IMR-90 (cell line): ENCODE measurements at regions of chr11 and their contacts with region 1.

Region 1: GRCh38 chr11:120335908-120336640 is at the start of gene ARHGEF12:
- DNase-seq: peak; percentile 97
- ATAC-seq: peak; percentile 61
- H3K4me3 ChIP-seq: peak within 1 kb of the TSS; percentile 93
- H3K27ac ChIP-seq: peak within 1 kb of the TSS; percentile 92
- H3K4me1 ChIP-seq: peaks cover 6% of the 10 kb centered on the region
- H3K27me3 ChIP-seq: no peaks in the 10 kb centered on the region
- CTCF ChIP-seq: peak; percentile 31; the same call in 1 of the 2 replicates
- POLR2A ChIP-seq: peak; percentile 73
- RAD21 ChIP-seq: no peak
- total RNA-seq, gene ARHGEF12: 115 and 131 TPM in 2 replicates

Region 2: GRCh38 chr11:120400564-120401364 is 64.7 kb after region 1 on chr11:
- CTCF ChIA-PET with region 1: no interaction called
- POLR2A ChIA-PET with region 1: no interaction called
- dilution Hi-C with region 1: no loop called
- in situ Hi-C with region 1: no loop called
- intact Hi-C with region 1: loop called (anchors 2 kb)
- DNase-seq: peak; percentile 99
- ATAC-seq: peak; percentile 86
- H3K4me3 ChIP-seq: peak overlapping the region; percentile 13; the same call in 1 of the 2 replicates
- H3K27ac ChIP-seq: no peak overlapping the region
- H3K4me1 ChIP-seq: peaks cover 3% of the 10 kb centered on the region; the same call in 1 of the 2 replicates
- H3K27me3 ChIP-seq: no peaks in the 10 kb centered on the region
- CTCF ChIP-seq: no peak
- POLR2A ChIP-seq: no peak
- RAD21 ChIP-seq: 0 out of 2 replicates have a peak, but pooled peaks have one; percentile 6

Region 3: DNA sequence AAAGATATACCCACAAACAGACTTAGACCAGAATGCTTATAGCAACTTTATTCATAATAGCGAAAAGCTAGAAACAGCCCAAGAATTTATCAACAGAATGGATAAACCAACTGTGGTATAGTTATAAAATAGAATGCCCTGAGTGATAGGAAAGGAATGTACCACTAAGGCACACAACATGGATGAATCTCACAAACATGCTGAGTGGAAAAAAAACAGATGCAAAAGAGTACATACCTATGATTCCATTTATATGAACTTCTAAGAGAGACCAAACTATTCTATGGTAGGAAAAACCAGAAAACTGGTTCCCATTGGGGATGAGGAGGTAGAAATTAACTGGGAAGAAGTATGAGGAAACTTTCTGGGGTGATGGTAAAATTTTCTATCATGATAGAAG is 135.1 kb after region 1 on chr11:
- CTCF ChIA-PET with region 1: interaction called, 4 read pairs
- POLR2A ChIA-PET with region 1: no interaction called
- dilution Hi-C with region 1: no loop called
- in situ Hi-C with region 1: no loop called
- intact Hi-C with region 1: loop called (anchors 1 kb)
- DNase-seq: peak; percentile 89
- ATAC-seq: peak; percentile 93
- H3K4me3 ChIP-seq: no peak overlapping the region
- H3K27ac ChIP-seq: peak overlapping the region; percentile 97; the same call in 1 of the 2 replicates
- H3K4me1 ChIP-seq: peaks cover 7% of the 10 kb centered on the region; the same call in 1 of the 2 replicates
- H3K27me3 ChIP-seq: no peaks in the 10 kb centered on the region
- CTCF ChIP-seq: no peak
- POLR2A ChIP-seq: no peak
- RAD21 ChIP-seq: no peak

Region 4: GRCh38 chr11:120547811-120548681 is 212.0 kb after region 1 on chr11:
- CTCF ChIA-PET with region 1: no interaction called
- POLR2A ChIA-PET with region 1: no interaction called
- dilution Hi-C with region 1: no loop called
- in situ Hi-C with region 1: no loop called
- intact Hi-C with region 1: loop called (anchors 5 kb)
- DNase-seq: peak; percentile 98
- ATAC-seq: peak; percentile 74
- H3K4me3 ChIP-seq: no peak overlapping the region
- H3K27ac ChIP-seq: peak overlapping the region; percentile 66
- H3K4me1 ChIP-seq: peaks cover 23% of the 10 kb centered on the region
- H3K27me3 ChIP-seq: no peaks in the 10 kb centered on the region
- CTCF ChIP-seq: no peak
- POLR2A ChIP-seq: no peak
- RAD21 ChIP-seq: peak; percentile 17

Region 5: GRCh38 chr11:120773501-120774031 is 437.5 kb after region 1 on chr11:
- CTCF ChIA-PET with region 1: no interaction called
- POLR2A ChIA-PET with region 1: no interaction called
- dilution Hi-C with region 1: no loop called
- in situ Hi-C with region 1: no loop called
- intact Hi-C with region 1: no loop called
- DNase-seq: no peak
- ATAC-seq: no peak
- H3K4me3 ChIP-seq: no peak overlapping the region
- H3K27ac ChIP-seq: no peak overlapping the region
- H3K4me1 ChIP-seq: no peaks in the 10 kb centered on the region
- H3K27me3 ChIP-seq: peaks cover 7% of the 10 kb centered on the region
- CTCF ChIP-seq: no peak
- POLR2A ChIP-seq: no peak
- RAD21 ChIP-seq: no peak

Region 6: DNA sequence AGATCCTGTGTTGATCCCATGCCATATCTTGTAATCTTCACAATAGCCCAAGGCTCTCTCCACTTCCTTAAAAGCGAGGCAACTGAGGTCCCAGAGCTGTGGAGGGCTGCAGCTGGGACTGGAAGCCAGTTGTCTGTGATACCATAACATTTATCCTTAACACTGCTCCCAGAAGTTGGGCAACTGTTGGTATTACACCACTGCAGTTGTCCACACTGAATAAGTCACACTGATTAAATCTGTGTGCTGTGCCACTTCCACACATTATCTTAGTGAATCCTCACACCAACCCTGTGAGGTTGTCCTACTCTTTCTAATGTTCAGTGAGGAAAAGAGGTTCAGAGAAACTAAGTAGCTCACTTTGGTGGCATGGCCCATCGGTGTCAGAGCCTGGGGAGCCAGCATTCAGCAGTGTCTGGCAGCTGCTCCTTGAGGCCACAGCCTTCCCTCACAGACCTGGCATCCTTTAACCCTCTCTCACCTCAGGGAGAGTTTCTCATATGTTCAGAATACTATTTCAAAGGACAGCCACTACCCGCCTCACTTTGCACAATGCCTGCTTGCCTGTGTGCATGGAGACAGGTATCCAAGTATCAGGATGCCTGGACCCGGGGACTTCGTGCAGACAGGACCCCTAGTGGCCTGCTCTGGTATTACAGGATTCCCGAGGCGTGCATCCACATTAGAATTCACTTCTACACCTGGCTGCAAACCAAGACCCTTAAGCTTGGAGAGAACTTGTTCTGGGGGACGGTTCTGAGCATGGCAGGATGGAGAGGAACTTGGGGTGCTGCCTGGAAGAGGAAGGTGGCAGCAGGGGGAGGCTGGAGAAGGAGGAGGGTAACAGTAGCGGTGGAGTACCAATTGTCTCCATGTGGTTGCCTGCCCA is 466.0 kb after region 1 on chr11:
- CTCF ChIA-PET with region 1: interaction called, 3 read pairs
- POLR2A ChIA-PET with region 1: no interaction called
- dilution Hi-C with region 1: no loop called
- in situ Hi-C with region 1: no loop called
- intact Hi-C with region 1: loop called (anchors 10 kb)
- DNase-seq: peak; percentile 50
- ATAC-seq: peak; percentile 97
- H3K4me3 ChIP-seq: no peak overlapping the region
- H3K27ac ChIP-seq: no peak overlapping the region
- H3K4me1 ChIP-seq: peaks cover under 1% of the 10 kb centered on the region; the same call in 1 of the 2 replicates
- H3K27me3 ChIP-seq: peaks cover 4% of the 10 kb centered on the region; the same call in 1 of the 2 replicates
- CTCF ChIP-seq: peak; percentile 72
- POLR2A ChIP-seq: no peak
- RAD21 ChIP-seq: peak; percentile 58

Region 7: DNA sequence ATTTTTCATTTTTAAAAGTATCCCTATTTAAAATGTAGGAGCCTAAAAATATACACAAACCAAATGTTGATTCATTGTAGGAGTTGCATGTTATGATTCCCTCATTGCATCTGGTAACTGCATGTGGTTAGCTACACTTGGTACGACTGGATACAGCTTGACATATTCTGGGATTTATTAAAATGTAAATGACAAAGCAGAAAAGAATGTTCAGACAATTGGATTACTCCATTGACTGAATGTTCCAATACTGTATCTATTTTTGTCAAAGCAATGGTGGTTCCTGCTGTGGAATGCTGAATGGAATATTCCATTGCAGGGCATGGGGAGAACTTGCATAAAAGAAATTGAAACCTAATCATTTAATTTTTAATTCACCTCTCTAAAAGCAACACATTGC is 1749.2 kb after region 1 on chr11:
- CTCF ChIA-PET with region 1: no interaction called
- POLR2A ChIA-PET with region 1: interaction called, 11 read pairs
- dilution Hi-C with region 1: no loop called
- in situ Hi-C with region 1: no loop called
- intact Hi-C with region 1: no loop called
- DNase-seq: peak; percentile 95
- ATAC-seq: peak; percentile 42
- H3K4me3 ChIP-seq: no peak overlapping the region
- H3K27ac ChIP-seq: no peak overlapping the region
- H3K4me1 ChIP-seq: peaks cover 11% of the 10 kb centered on the region
- H3K27me3 ChIP-seq: no peaks in the 10 kb centered on the region
- CTCF ChIP-seq: no peak
- POLR2A ChIP-seq: no peak
- RAD21 ChIP-seq: no peak